CD8-positive, alpha-beta T cell (primary cell): ENCODE measurements at regions of chr9 and their contacts with region 1.

Region 1: GRCh38 chr9:26870292-26870691 is 22.3 kb downstream of the CAAP1 start:
- DNase-seq: no peak
- ATAC-seq: no peak
- H3K4me3 ChIP-seq: no peak overlapping the region
- H3K4me3 Mint-ChIP-seq: no peak overlapping the region
- H3K27ac ChIP-seq: no peak overlapping the region
- H3K27ac Mint-ChIP-seq: no peak overlapping the region
- H3K4me1 ChIP-seq: no peaks in the 10 kb centered on the region
- H3K4me1 Mint-ChIP-seq: peaks cover 1% of the 10 kb centered on the region
- H3K27me3 ChIP-seq: no peaks in the 10 kb centered on the region
- H3K27me3 Mint-ChIP-seq: no peaks in the 10 kb centered on the region
- CTCF ChIP-seq: no peak

Region 2: DNA sequence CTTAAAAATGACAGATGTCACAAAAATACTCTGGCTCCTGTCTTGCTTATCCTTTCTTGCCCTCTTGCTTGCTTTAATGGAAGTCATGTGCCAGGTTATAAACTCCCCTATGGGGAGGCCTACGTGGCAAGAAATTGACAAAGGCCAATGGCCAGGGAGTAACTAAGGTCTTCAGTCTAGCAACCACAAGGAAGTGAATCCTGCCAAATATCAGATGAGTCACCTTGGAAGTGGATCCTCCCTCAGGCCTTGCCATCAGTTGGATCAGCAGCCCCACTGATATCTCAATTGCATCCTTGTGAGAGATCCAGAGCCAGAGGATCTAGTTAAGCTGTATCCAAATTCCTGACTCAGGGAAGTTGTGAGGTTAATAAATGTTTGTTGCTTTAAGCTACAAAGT is 60.5 kb before region 1 on chr9:
- CTCF ChIA-PET with region 1: no interaction called
- POLR2A ChIA-PET with region 1: no interaction called
- intact Hi-C with region 1: no loop called
- DNase-seq: no peak
- ATAC-seq: no peak
- H3K4me3 ChIP-seq: no peak overlapping the region
- H3K4me3 Mint-ChIP-seq: no peak overlapping the region
- H3K27ac ChIP-seq: no peak overlapping the region
- H3K27ac Mint-ChIP-seq: no peak overlapping the region
- H3K4me1 ChIP-seq: no peaks in the 10 kb centered on the region
- H3K4me1 Mint-ChIP-seq: no peaks in the 10 kb centered on the region
- H3K27me3 ChIP-seq: no peaks in the 10 kb centered on the region
- H3K27me3 Mint-ChIP-seq: peaks cover 5% of the 10 kb centered on the region
- CTCF ChIP-seq: no peak

Region 3: GRCh38 chr9:26856413-26857032 is 13.8 kb before region 1 on chr9:
- CTCF ChIA-PET with region 1: no interaction called
- POLR2A ChIA-PET with region 1: interaction called, 3 read pairs
- intact Hi-C with region 1: loop called in 1 of 2 experiments (anchors 1 kb)
- DNase-seq: peak in 2 of 9 experiments; percentile 10 to 24
- ATAC-seq: no peak
- H3K4me3 ChIP-seq: no peak overlapping the region
- H3K4me3 Mint-ChIP-seq: no peak overlapping the region
- H3K27ac ChIP-seq: no peak overlapping the region
- H3K27ac Mint-ChIP-seq: no peak overlapping the region
- H3K4me1 ChIP-seq: no peaks in the 10 kb centered on the region
- H3K4me1 Mint-ChIP-seq: no peaks in the 10 kb centered on the region
- H3K27me3 ChIP-seq: no peaks in the 10 kb centered on the region
- H3K27me3 Mint-ChIP-seq: no peaks in the 10 kb centered on the region
- CTCF ChIP-seq: peak; percentile 30